Heart left ventricle (tissue), 16 donors: ENCODE measurements at regions of chr18 and their contacts with region 1.

Region 1: DNA sequence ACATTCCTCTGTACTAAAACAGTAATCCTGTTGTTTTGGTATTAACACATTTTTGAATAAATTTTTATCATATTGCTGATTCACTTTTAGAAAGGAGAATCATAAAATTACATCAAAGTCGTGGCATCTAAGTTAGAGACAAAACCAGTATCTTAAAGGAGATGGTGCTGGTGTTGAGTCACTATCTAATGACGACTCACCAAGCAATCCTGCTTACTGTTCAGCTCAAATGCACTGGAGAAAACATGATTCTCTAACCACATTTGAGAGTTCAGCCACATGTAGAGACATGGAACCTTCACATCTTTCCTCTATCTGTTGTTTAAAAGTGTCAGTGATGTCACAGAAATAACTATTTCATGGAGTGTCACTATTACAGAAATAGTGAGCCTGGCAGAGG is 473.8 kb downstream of the TGIF1 start:
- DNase-seq: no peak
- ATAC-seq: no peak
- H3K4me3 ChIP-seq: no peak overlapping the region
- H3K27ac ChIP-seq: no peak overlapping the region
- H3K4me1 ChIP-seq: peaks cover 0 to 28% (median 6%) of the 10 kb centered on the region in 12 donors
- H3K27me3 ChIP-seq: no peaks in the 10 kb centered on the region
- CTCF ChIP-seq: no peak
- POLR2A ChIP-seq: no peak

Region 2: GRCh38 chr18:3511922-3512372 is 411.8 kb before region 1 on chr18:
- intact Hi-C with region 1: no loop called
- DNase-seq: no peak
- ATAC-seq: no peak
- H3K4me3 ChIP-seq: no peak overlapping the region
- H3K27ac ChIP-seq: no peak overlapping the region
- H3K4me1 ChIP-seq: peaks cover 0 to 5% (median 0%) of the 10 kb centered on the region in 12 donors
- H3K27me3 ChIP-seq: no peaks in the 10 kb centered on the region
- CTCF ChIP-seq: no peak
- POLR2A ChIP-seq: no peak

Region 3: DNA sequence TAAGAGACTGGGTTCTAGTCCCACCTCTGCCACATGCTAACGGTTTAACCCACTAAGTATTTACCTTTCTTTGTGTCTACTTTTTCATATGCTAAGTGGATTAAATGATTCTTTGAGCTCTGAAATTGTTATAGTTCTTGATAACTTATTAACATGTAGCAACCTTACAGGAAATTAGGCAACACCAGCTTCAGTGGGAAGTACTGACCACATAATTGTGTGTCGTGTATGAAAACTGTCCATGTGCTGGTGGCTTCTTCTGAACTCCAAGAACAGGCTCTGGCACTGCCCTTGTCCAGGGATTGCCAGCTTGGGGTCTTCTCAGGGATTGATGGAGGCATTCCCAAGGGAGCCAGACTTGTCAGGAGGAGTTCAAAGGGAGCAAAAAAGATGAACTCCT is 46.1 kb before region 1 on chr18:
- intact Hi-C with region 1: loop called in 2 of 10 experiments (anchors 2 to 5 kb)
- DNase-seq: no peak
- ATAC-seq: no peak
- H3K4me3 ChIP-seq: no peak overlapping the region
- H3K27ac ChIP-seq: no peak overlapping the region
- H3K4me1 ChIP-seq: peaks cover 0 to 40% (median 0%) of the 10 kb centered on the region in 12 donors
- H3K27me3 ChIP-seq: no peaks in the 10 kb centered on the region
- CTCF ChIP-seq: no peak
- POLR2A ChIP-seq: no peak

Region 4: DNA sequence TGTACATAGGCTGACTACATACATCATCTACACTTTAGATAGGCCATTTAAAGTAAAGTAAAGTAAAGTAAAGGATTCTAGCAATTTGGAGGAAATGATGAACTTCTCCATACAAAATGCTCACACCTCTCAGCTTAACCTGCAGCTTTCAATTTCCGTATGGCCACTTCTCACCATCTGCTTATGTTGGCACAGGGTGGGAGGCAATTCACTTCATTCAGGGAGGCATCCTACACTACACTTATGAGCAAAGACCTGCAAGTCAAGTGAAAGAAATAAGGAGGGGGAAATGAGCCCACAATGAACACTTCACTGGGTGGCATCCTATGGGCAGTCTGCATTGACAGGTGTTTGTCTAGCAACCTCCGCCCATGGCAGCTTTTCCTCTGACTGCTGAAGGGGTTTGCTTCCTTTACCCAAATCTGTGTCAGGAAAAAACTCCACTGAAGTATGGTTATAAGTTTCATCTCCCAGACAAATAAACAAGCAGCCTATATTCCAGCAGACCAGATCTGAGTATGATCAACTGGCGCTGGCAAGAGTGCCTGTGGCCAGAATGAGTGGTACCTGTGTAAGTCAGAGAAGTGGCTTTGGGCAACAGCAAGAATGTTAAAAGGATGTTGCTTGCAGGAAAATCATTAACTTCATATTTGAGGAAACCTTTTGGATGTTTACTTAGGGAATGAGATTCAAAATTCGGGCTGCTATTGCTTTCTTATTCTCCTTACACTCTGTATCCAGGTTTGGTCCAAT is 24.7 kb before region 1 on chr18:
- intact Hi-C with region 1: loop called in 1 of 10 experiments (anchors 2 kb)
- DNase-seq: no peak
- ATAC-seq: no peak
- H3K4me3 ChIP-seq: no peak overlapping the region
- H3K27ac ChIP-seq: no peak overlapping the region
- H3K4me1 ChIP-seq: no peaks in the 10 kb centered on the region
- H3K27me3 ChIP-seq: no peaks in the 10 kb centered on the region
- CTCF ChIP-seq: no peak
- POLR2A ChIP-seq: no peak

Region 5: GRCh38 chr18:3966985-3967856 is 43.5 kb after region 1 on chr18:
- intact Hi-C with region 1: loop called in 3 of 10 experiments (anchors 5 kb)
- DNase-seq: peak in 4 of 5 donors; percentile 51 to 58 (median 54)
- ATAC-seq: peak; percentile 92 to 97 (median 96)
- H3K4me3 ChIP-seq: no peak overlapping the region
- H3K27ac ChIP-seq: peak overlapping the region in 10 of 12 donors; percentile 7 to 85 (median 64)
- H3K4me1 ChIP-seq: peaks cover 0 to 15% (median 3%) of the 10 kb centered on the region in 12 donors
- H3K27me3 ChIP-seq: no peaks in the 10 kb centered on the region
- CTCF ChIP-seq: peak in 1 of 12 donors; percentile 13
- POLR2A ChIP-seq: no peak